Mammary epithelial cell (primary cell): ENCODE measurements at regions of chr14 and their contacts with region 1.

Region 1: GRCh38 chr14:74612350-74613021 is 449 bp upstream of the LTBP2 start:
- DNase-seq: peak; percentile 68
- H3K4me3 ChIP-seq: peak overlapping the region; percentile 62 to 70 (median 64)
- H3K27ac ChIP-seq: no peak overlapping the region
- H3K4me1 ChIP-seq: peaks cover 76% of the 10 kb centered on the region
- H3K27me3 ChIP-seq: no peaks in the 10 kb centered on the region
- CTCF ChIP-seq: peak; percentile 38 to 64

Region 2: DNA sequence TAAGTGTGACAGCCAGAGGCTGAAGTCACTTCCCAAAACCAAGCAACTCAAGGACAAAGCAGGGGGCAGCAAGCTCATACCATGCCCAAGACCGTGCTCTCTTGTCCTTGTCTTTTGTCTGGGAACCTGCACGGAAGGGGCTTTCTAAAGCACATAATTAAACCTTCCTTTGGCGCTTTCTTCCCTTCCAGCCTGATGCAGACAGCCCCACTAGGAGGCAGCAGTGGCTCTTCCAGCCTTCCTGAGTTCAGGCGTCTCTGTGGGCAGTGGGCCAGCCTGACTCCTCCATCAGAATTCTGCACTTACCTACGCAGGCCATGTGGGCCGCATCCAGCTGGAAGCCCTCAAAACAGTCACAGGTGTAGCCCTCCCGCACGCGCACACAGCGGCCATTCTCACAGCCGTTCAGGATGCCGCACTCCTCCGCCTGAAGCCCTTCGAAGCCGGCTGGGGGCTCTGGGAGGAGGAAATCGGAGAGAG is 111.3 kb before region 1 on chr14:
- CTCF ChIA-PET with region 1: no interaction called
- dilution Hi-C with region 1: no loop called
- in situ Hi-C with region 1: no loop called
- intact Hi-C with region 1: loop called (anchors 1 kb)
- DNase-seq: peak; percentile 66
- H3K4me3 ChIP-seq: no peak overlapping the region
- H3K27ac ChIP-seq: no peak overlapping the region
- H3K4me1 ChIP-seq: peaks cover 20% of the 10 kb centered on the region
- H3K27me3 ChIP-seq: no peaks in the 10 kb centered on the region
- CTCF ChIP-seq: peak; percentile 87 to 88

Region 3: GRCh38 chr14:74538411-74539391 is 73.8 kb before region 1 on chr14:
- CTCF ChIA-PET with region 1: no interaction called
- dilution Hi-C with region 1: no loop called
- in situ Hi-C with region 1: no loop called
- intact Hi-C with region 1: no loop called
- DNase-seq: no peak
- H3K4me3 ChIP-seq: no peak overlapping the region
- H3K27ac ChIP-seq: no peak overlapping the region
- H3K4me1 ChIP-seq: no peaks in the 10 kb centered on the region
- H3K27me3 ChIP-seq: no peaks in the 10 kb centered on the region
- CTCF ChIP-seq: no peak

Region 4: DNA sequence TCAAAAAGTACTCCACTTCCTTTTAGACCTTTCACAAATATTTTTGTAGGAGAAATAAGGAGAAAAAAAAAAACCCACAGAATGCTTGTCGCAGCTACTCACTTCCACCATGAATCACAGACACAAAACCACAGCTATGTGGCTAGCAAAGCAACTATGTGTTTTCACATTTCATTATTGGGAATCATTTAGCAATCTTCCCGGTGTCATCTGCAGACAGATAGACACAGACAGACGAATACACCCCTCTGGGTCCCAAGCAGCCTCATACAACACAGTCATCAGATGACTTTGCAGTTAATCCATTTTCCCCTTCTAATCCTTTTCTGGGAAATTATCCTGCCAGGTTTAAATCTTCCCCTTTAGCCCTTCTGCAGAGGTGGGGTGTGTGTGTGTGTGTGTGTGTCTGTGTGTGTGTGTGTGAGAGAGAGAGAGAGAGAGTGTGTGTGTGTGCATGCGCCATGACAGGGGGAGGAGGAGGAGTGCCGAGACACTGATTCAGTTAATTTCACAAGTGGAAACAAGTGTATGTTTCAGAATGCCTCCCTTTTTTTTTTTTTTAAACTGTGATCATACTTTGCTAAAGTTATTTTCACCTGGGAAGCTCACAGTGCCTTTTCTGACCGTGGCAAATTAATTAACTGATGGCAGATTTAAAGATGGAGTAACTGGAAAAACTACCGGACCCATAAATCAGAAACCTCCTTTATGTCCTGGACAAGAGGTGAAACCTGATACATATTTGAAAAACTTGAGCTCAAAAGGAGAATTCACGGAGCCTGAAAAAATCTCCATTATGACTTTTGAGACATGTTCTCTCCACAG is 40.4 kb before region 1 on chr14:
- CTCF ChIA-PET with region 1: interaction called, 17 read pairs
- dilution Hi-C with region 1: loop called (anchors 5 kb)
- in situ Hi-C with region 1: no loop called
- intact Hi-C with region 1: loop called (anchors 1 kb)
- DNase-seq: peak; percentile 99
- H3K4me3 ChIP-seq: peak overlapping the region; percentile 24 to 37 (median 30)
- H3K27ac ChIP-seq: peak overlapping the region; percentile 98
- H3K4me1 ChIP-seq: peaks cover 85% of the 10 kb centered on the region
- H3K27me3 ChIP-seq: no peaks in the 10 kb centered on the region
- CTCF ChIP-seq: no peak

Region 5: GRCh38 chr14:74647678-74648461 is 35.4 kb after region 1 on chr14:
- CTCF ChIA-PET with region 1: no interaction called
- dilution Hi-C with region 1: no loop called
- in situ Hi-C with region 1: no loop called
- intact Hi-C with region 1: loop called (anchors 5 kb)
- DNase-seq: peak; percentile 57
- H3K4me3 ChIP-seq: no peak overlapping the region
- H3K27ac ChIP-seq: no peak overlapping the region
- H3K4me1 ChIP-seq: peaks cover 73% of the 10 kb centered on the region
- H3K27me3 ChIP-seq: no peaks in the 10 kb centered on the region
- CTCF ChIP-seq: no peak

Region 6: DNA sequence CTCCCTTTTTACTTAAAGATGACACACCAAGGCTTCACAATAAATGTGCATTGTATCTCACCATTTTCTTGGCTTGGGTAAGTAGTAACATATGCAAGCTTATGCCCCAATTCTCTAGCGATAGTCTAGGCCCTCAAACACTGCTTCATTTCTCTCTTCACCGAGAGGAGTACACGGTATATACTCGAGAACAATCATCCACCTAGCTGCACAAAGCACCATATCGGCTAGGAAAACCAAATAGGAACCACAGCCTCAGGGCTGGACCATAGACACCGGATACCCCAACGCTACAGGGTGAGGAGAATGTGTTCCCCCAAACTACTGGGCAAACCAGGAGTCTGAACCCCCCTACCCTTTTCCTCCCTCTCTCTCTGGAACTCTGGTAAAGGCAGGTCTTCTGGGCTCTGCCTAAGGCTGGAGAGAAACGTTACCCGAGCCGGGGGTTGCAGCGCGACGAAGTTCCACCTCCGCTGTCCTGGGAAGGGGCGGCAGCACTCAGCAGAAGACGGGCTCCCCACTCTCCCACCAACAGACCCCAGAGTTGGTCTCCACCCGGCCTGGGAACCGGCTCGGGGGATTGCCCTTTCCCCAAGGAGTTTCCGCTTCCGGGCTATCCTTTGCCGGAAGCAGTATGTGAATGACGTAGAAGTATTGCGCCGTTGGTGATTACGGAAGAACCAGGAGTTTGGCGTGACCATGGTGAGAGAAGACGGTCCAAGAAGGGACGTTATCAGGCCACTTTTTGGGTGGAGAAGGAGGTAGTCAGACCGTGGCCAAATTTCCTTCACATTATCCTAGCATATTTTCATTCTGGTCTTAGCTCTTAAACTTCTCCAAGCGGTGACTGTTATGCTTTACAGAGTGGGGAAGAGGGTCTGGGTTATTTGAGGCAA is 100.3 kb after region 1 on chr14 and contains the starts of genes AREL1 and FCF1:
- CTCF ChIA-PET with region 1: no interaction called
- dilution Hi-C with region 1: no loop called
- in situ Hi-C with region 1: no loop called
- intact Hi-C with region 1: loop called (anchors 1 kb)
- DNase-seq: peak; percentile 87
- H3K4me3 ChIP-seq: peak within 1 kb of the TSS; percentile 89 to 97 (median 94)
- H3K27ac ChIP-seq: peak within 1 kb of the TSS; percentile 85
- H3K4me1 ChIP-seq: peaks cover 21% of the 10 kb centered on the region
- H3K27me3 ChIP-seq: no peaks in the 10 kb centered on the region
- CTCF ChIP-seq: no peak
- total RNA-seq, gene AREL1: 39.3 to 51.8 TPM
- total RNA-seq, gene FCF1: 39.2 to 57.1 TPM

Region 7: GRCh38 chr14:74793506-74794168 is 181.2 kb after region 1 on chr14:
- CTCF ChIA-PET with region 1: no interaction called
- dilution Hi-C with region 1: no loop called
- in situ Hi-C with region 1: loop called in 1 of 2 experiments (anchors 25 kb)
- intact Hi-C with region 1: no loop called
- DNase-seq: no peak
- H3K4me3 ChIP-seq: no peak overlapping the region
- H3K27ac ChIP-seq: no peak overlapping the region
- H3K4me1 ChIP-seq: no peaks in the 10 kb centered on the region
- H3K27me3 ChIP-seq: no peaks in the 10 kb centered on the region
- CTCF ChIP-seq: peak; percentile 17 to 36

Region 8: GRCh38 chr14:74905375-74906142 is 293.1 kb after region 1 on chr14:
- CTCF ChIA-PET with region 1: interaction called, 3 read pairs
- dilution Hi-C with region 1: no loop called
- in situ Hi-C with region 1: no loop called
- intact Hi-C with region 1: loop called (anchors 1 kb)
- DNase-seq: peak; percentile 20
- H3K4me3 ChIP-seq: no peak overlapping the region
- H3K27ac ChIP-seq: no peak overlapping the region
- H3K4me1 ChIP-seq: no peaks in the 10 kb centered on the region
- H3K27me3 ChIP-seq: no peaks in the 10 kb centered on the region
- CTCF ChIP-seq: peak; percentile 88 to 96